ENCODE measurements at regions of chr10 and their contacts with region 1.

Region 1: DNA sequence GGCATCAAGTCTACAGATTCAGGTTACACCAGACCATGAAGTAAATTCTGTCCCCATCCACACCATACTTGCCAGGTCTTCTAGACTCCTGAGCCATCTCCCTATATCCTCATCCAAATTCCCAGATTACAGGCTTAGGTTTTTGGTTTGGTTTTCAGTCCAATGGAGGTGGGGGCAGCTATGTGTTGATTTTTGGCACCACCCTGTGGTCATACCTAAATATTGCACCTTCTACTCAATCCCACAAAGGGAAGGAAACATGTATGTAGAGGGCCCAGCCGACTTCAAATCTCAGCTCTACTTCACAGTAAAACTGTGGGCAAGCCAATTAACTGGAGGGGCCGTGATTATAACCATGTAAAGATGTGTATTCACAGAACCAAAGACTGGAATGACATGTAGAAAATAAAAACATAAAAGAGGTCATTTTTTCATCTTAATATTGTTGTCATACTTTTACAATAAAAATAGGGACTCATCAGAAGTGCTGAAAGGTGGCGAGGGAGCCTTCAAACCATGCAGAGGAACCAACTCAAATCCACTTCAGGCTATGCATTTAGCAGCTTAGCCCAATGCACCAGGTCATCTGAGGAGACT is 19.8 kb downstream of the ERCC6 start:
- DNase-seq: no peak
- ATAC-seq: peak; percentile 93
- H3K4me3 ChIP-seq: no peak overlapping the region
- H3K27ac ChIP-seq: no peak overlapping the region
- H3K4me1 ChIP-seq: no peaks in the 10 kb centered on the region
- H3K27me3 ChIP-seq: no peaks in the 10 kb centered on the region
- CTCF ChIP-seq: peak; percentile 58 to 75 (median 66)
- EP300 ChIP-seq: no peak
- POLR2A ChIP-seq: no peak
- RAD21 ChIP-seq: peak; percentile 72

Region 2: GRCh38 chr10:48551861-48552591 is 967.1 kb before region 1 on chr10:
- CTCF ChIA-PET with region 1: no interaction called
- POLR2A ChIA-PET with region 1: no interaction called
- RAD21 ChIA-PET with region 1: no interaction called
- SMC1A ChIA-PET with region 1: no interaction called
- in situ Hi-C with region 1: no loop called
- intact Hi-C with region 1: loop called (anchors 10 kb)
- DNase-seq: no peak
- ATAC-seq: peak; percentile 93
- H3K4me3 ChIP-seq: no peak overlapping the region
- H3K27ac ChIP-seq: no peak overlapping the region
- H3K4me1 ChIP-seq: no peaks in the 10 kb centered on the region
- H3K27me3 ChIP-seq: no peaks in the 10 kb centered on the region; a peak in 1 of 4 replicates
- CTCF ChIP-seq: peak; percentile 60 to 84 (median 78)
- EP300 ChIP-seq: no peak
- POLR2A ChIP-seq: no peak
- RAD21 ChIP-seq: peak; percentile 80

Region 3: GRCh38 chr10:48976196-48976595 is 542.9 kb before region 1 on chr10:
- CTCF ChIA-PET with region 1: interaction called, 3 read pairs
- POLR2A ChIA-PET with region 1: no interaction called
- RAD21 ChIA-PET with region 1: no interaction called
- SMC1A ChIA-PET with region 1: interaction called, 4 read pairs
- in situ Hi-C with region 1: loop called (anchors 5 kb)
- intact Hi-C with region 1: loop called (anchors 2 kb)
- DNase-seq: no peak
- ATAC-seq: peak; percentile 65
- H3K4me3 ChIP-seq: no peak overlapping the region
- H3K27ac ChIP-seq: no peak overlapping the region
- H3K4me1 ChIP-seq: no peaks in the 10 kb centered on the region
- H3K27me3 ChIP-seq: no peaks in the 10 kb centered on the region
- CTCF ChIP-seq: peak in 2 of 3 experiments; percentile 21 to 37; a peak in 4 of 6 replicates
- EP300 ChIP-seq: no peak
- POLR2A ChIP-seq: no peak
- RAD21 ChIP-seq: peak; percentile 45

Region 4: DNA sequence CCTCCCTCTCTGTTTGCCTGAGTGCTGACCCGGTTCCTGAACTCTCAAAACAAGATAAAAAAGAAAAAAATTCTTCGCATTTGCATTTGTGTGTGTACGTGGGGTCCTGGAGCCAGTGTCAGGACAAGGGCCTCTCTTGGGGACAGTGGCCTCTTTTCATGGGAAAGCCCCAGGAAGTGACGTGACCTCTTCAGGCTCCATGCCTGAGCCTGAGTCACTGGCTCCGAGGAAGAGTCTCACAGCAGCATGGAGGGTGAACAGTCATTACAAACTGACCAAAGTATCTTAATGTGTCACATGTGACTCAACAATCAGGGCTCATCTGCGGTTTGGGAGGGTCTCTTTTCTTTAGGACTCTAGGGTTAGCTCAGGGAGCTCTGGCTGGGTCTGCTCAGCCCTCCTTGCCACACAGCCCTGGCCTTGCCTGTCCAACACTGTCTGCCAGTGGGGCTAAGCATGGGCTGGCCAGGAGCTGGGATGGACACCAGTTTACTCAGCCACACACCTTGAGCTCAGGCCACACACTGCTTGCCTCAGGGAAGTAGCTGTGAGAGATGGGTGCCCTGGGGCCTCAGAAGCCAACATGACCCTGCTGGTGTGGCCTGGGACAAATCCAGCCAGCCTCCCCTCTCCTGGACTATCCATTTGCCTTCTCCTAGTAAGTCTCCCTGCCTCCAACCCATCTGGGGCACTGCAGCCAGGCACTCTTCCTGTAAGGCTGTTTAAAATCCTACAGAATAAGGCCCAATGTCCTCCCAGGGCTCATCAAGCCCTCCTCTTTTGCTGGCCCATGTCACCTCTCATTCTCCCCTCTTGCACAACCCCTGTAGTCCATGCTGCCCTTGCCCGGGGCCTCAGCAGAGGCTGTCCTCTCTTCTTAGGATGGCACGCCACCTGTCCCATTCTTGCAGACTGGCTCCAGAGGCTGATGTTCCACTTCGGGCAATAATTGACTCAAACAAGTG is 341.4 kb before region 1 on chr10:
- CTCF ChIA-PET with region 1: no interaction called
- POLR2A ChIA-PET with region 1: no interaction called
- RAD21 ChIA-PET with region 1: no interaction called
- SMC1A ChIA-PET with region 1: no interaction called
- in situ Hi-C with region 1: no loop called
- intact Hi-C with region 1: loop called (anchors 10 kb)
- DNase-seq: peak; percentile 85
- ATAC-seq: peak; percentile 85
- H3K4me3 ChIP-seq: no peak overlapping the region
- H3K27ac ChIP-seq: peak overlapping the region; percentile 87
- H3K4me1 ChIP-seq: peaks cover 51% of the 10 kb centered on the region
- H3K27me3 ChIP-seq: no peaks in the 10 kb centered on the region
- CTCF ChIP-seq: no peak
- EP300 ChIP-seq: peak; percentile 67 to 83
- POLR2A ChIP-seq: no peak
- RAD21 ChIP-seq: peak; percentile 21; the same call in 1 of the 2 replicates

Region 5: DNA sequence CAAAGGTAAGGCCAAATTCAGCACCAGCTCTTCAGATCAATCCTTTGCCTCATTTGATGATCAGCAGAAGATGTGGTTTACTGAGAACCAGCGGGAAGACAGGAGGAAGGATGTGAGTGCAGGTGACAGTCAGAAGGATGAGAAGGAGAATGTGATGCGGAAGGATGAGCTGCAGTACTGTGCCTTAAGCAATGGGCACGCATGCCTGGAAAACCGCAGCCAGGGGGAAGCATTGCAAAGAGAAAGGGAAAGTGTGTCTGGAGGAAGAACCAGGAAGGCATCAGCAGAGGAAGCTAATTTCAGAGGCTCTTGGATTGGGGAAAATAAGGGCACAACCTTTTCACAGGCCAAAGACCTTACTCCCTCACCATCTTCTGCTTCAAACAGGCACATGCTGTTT is 194.4 kb before region 1 on chr10:
- CTCF ChIA-PET with region 1: no interaction called
- POLR2A ChIA-PET with region 1: no interaction called
- RAD21 ChIA-PET with region 1: no interaction called
- SMC1A ChIA-PET with region 1: no interaction called
- in situ Hi-C with region 1: no loop called
- intact Hi-C with region 1: no loop called
- DNase-seq: no peak
- ATAC-seq: no peak
- H3K4me3 ChIP-seq: no peak overlapping the region
- H3K27ac ChIP-seq: no peak overlapping the region
- H3K4me1 ChIP-seq: no peaks in the 10 kb centered on the region
- H3K27me3 ChIP-seq: peaks cover 2 to 7% of the 10 kb centered on the region in 2 experiments; a peak in 3 of 4 replicates
- CTCF ChIP-seq: no peak
- EP300 ChIP-seq: no peak
- POLR2A ChIP-seq: no peak
- RAD21 ChIP-seq: no peak

Region 6: DNA sequence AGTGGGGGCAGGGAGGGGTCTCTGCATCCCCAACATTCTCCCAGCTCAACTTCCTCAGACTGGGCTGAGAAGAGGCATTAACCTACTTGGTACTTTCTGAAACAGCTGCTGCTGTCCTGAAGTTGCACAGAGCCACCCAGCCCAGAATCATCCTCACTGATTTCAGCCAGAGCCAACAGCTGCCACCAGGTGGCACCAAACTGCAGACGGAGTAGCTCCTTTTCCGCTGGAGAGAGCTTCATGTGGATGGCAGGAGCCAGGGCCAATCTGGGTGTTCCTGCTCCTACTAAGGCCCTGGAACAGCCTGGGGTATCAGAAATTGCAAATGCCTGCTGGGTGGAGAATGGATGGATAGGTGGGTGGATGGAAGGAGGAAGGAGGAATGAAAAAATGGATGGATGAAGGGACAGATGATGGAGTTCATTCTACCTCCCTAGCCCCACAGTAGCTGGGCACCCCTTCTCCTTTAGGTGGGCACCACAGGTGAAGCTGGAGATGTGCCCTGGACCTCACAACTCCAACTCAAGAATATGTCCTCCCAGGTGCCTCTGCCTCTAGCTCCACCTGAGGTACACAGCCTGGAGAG is 111.4 kb before region 1 on chr10:
- CTCF ChIA-PET with region 1: interaction called, 78 read pairs
- POLR2A ChIA-PET with region 1: no interaction called
- RAD21 ChIA-PET with region 1: interaction called, 18 read pairs
- SMC1A ChIA-PET with region 1: interaction called, 17 read pairs
- in situ Hi-C with region 1: no loop called
- intact Hi-C with region 1: no loop called
- DNase-seq: no peak
- ATAC-seq: peak; percentile 96
- H3K4me3 ChIP-seq: no peak overlapping the region
- H3K27ac ChIP-seq: no peak overlapping the region
- H3K4me1 ChIP-seq: no peaks in the 10 kb centered on the region
- H3K27me3 ChIP-seq: peaks cover 0 to 1% of the 10 kb centered on the region in 2 experiments; a peak in 1 of 4 replicates
- CTCF ChIP-seq: peak; percentile 88 to 93 (median 92)
- EP300 ChIP-seq: no peak
- POLR2A ChIP-seq: no peak
- RAD21 ChIP-seq: peak; percentile 81

Region 7: GRCh38 chr10:49471532-49471931 is 47.5 kb before region 1 on chr10:
- CTCF ChIA-PET with region 1: no interaction called
- POLR2A ChIA-PET with region 1: no interaction called
- RAD21 ChIA-PET with region 1: no interaction called
- SMC1A ChIA-PET with region 1: no interaction called
- in situ Hi-C with region 1: no loop called
- intact Hi-C with region 1: no loop called
- DNase-seq: no peak
- ATAC-seq: no peak
- H3K4me3 ChIP-seq: no peak overlapping the region
- H3K27ac ChIP-seq: no peak overlapping the region
- H3K4me1 ChIP-seq: no peaks in the 10 kb centered on the region
- H3K27me3 ChIP-seq: no peaks in the 10 kb centered on the region
- CTCF ChIP-seq: no peak
- EP300 ChIP-seq: no peak
- POLR2A ChIP-seq: no peak
- RAD21 ChIP-seq: no peak

Region 8: GRCh38 chr10:49532461-49532860 is 13.4 kb after region 1 on chr10:
- CTCF ChIA-PET with region 1: interaction called, 10 read pairs
- POLR2A ChIA-PET with region 1: no interaction called
- RAD21 ChIA-PET with region 1: interaction called, 8 read pairs
- SMC1A ChIA-PET with region 1: interaction called, 13 read pairs
- in situ Hi-C with region 1: no loop called
- intact Hi-C with region 1: no loop called
- DNase-seq: no peak
- ATAC-seq: no peak
- H3K4me3 ChIP-seq: no peak overlapping the region
- H3K27ac ChIP-seq: no peak overlapping the region
- H3K4me1 ChIP-seq: peaks cover 16% of the 10 kb centered on the region
- H3K27me3 ChIP-seq: no peaks in the 10 kb centered on the region
- CTCF ChIP-seq: no peak
- EP300 ChIP-seq: no peak
- POLR2A ChIP-seq: no peak
- RAD21 ChIP-seq: no peak